H1 (cell line): ENCODE measurements at regions of chr9 and their contacts with region 1.

Region 1: DNA sequence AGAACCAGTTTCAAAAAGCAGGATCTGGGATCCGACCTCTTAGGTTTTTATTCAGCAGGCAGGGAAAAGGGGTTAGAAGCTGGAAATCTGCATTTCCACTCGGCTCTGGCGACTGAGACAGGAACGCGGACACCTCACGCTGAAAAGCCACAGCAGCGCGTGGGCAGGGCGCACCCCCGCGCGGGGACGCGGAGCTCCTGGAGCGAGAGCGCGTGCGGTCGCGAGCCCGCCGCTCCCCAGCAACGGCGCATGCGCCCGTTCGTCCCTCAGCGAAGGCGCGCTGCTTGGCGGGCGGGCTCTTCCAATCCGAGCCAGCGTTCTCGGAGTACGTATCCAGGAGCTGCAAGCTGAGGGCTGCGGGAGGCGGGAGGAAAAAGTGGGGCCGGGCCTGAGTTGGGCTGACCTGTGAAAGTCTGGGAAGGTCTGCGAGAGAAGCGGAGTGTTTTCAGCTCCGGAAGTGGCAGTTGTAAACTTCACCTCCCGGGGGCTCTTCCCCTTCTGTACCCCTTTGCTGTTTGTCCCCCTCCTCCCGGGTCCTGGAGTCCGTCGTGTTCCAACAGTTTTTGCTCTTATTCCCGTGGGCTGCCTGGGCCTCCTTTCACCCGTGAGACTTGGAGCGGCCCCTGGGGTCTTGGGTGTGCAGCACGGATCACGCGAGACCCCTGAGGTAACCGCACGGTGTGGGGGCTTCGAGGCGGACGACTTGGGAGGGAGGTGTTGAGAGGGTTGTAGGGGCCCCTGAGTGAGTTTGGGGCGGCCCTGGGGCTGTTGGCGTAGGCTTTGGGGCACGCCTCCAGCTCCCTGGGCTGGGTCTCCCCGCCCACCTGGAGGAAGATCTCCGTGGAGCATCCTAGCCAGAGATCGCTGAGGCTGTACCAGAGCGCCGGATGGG is at the start of gene CCDC171:
- DNase-seq: peak; percentile 88
- H3K4me3 ChIP-seq: peak within 1 kb of the TSS; percentile 80 to 92 (median 81)
- H3K27ac ChIP-seq: peak within 1 kb of the TSS; percentile 81
- H3K4me1 ChIP-seq: peaks cover 0 to 2% (median 1%) of the 10 kb centered on the region in 4 experiments; a peak in 1 of 7 replicates
- H3K27me3 ChIP-seq: no peaks in the 10 kb centered on the region
- CTCF ChIP-seq: no peak
- EP300 ChIP-seq: no peak
- POLR2A ChIP-seq: peak; percentile 66 to 82
- RAD21 ChIP-seq: no peak
- total RNA-seq, gene CCDC171: 1.9 and 2.3 TPM in 2 replicates

Region 2: DNA sequence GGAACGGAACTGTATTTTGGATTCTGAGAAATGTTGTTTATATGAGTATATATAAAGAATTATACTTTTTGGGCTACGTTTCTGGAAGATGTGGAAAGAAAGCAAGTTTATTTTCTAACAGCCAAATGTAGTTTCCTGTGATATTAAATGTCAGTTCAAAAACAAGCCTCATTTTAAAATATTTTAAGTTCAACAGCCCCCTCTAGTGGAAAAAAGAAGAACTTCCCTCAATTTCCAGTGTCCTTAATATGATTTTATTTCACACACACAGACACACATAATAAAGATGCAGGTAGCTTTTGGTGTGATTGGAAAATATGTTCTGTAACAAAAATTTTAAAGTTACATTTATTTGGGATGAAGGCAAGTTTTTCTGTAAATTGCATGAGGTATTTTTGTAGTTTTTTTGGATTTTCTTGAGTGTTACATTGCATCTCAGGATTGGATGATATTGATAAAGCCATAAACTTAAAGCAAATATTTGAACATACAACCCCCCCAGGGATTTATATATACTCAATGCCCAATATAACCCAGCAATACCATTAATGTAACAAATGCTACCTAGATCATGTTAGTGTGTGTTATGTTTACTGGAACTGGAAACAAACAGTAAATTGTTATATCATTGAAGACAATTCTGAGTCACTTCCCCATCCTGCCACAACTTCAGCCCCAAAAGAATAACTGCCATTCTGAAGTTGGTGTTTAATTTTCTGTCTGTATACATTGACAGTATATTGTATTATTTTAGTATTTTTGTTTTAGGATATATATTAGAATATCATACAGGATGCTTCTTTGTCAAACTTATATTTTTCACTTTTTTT is 54.0 kb after region 1 on chr9:
- CTCF ChIA-PET with region 1: interaction called, 21 read pairs
- POLR2A ChIA-PET with region 1: interaction called, 3 read pairs
- DNase-seq: no peak
- H3K4me3 ChIP-seq: no peak overlapping the region
- H3K27ac ChIP-seq: no peak overlapping the region
- H3K4me1 ChIP-seq: no peaks in the 10 kb centered on the region
- H3K27me3 ChIP-seq: no peaks in the 10 kb centered on the region
- CTCF ChIP-seq: peak in 2 of 3 experiments; percentile 27 to 32; a peak in 2 of 4 replicates
- EP300 ChIP-seq: no peak
- POLR2A ChIP-seq: no peak
- RAD21 ChIP-seq: peak in 1 of 2 experiments; percentile 60